IMR-90 (cell line): ENCODE measurements at regions of chr3 and their contacts with region 1.

Region 1: GRCh38 chr3:151086484-151087456 is 1.3 kb downstream of the MED12L start:
- DNase-seq: peak; percentile 86
- ATAC-seq: peak; percentile 90
- H3K4me3 ChIP-seq: peak overlapping the region; percentile 38
- H3K27ac ChIP-seq: no peak overlapping the region
- H3K4me1 ChIP-seq: no peaks in the 10 kb centered on the region
- H3K27me3 ChIP-seq: peaks cover 47% of the 10 kb centered on the region
- CTCF ChIP-seq: peak; percentile 66
- POLR2A ChIP-seq: no peak
- RAD21 ChIP-seq: peak; percentile 57

Region 2: GRCh38 chr3:150787741-150788370 is 298.9 kb before region 1 on chr3:
- CTCF ChIA-PET with region 1: no interaction called
- POLR2A ChIA-PET with region 1: no interaction called
- dilution Hi-C with region 1: no loop called
- in situ Hi-C with region 1: no loop called
- intact Hi-C with region 1: loop called (anchors 5 kb)
- DNase-seq: peak; percentile 64
- ATAC-seq: peak; percentile 93
- H3K4me3 ChIP-seq: no peak overlapping the region
- H3K27ac ChIP-seq: no peak overlapping the region
- H3K4me1 ChIP-seq: no peaks in the 10 kb centered on the region
- H3K27me3 ChIP-seq: peaks cover 23% of the 10 kb centered on the region
- CTCF ChIP-seq: peak; percentile 81
- POLR2A ChIP-seq: no peak
- RAD21 ChIP-seq: peak; percentile 73

Region 3: DNA sequence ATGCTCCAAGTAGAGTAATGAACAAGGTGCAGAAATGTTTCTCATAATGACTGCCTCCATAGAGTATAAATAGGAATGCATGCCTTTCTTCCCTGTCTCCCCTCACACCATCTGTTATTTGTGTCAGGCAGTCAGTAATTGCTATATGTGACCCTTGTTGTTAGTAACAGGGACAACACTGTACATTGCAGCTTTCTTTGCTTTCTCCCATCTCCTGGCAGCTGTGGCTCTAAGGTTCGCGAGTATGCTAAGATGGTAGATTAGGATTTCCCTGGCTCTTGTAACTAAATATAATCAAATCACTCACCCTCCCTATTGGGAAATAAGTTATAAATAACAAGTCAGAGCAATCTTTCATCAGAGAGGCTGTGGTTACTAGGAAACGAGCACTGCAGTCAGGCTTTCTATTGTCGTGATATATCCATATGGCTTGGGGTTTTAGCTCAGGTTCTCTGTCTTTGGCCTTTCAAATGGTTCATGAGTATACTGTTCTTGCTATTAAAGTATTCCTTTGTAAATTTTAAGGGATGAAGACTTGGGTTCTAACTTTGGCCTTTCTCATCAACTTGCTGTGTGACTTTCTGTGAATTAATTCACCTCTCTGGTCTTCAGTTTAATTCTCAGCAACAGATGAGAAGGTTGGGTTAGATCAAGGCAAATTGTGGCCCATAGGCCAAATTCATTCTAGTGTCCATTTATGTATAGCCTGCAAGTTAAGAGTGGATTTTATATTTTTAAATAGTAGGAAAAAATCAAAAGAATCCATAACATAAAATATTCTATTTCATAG is 173.4 kb before region 1 on chr3:
- CTCF ChIA-PET with region 1: no interaction called
- POLR2A ChIA-PET with region 1: no interaction called
- dilution Hi-C with region 1: no loop called
- in situ Hi-C with region 1: no loop called
- intact Hi-C with region 1: no loop called
- DNase-seq: no peak
- ATAC-seq: no peak
- H3K4me3 ChIP-seq: no peak overlapping the region
- H3K27ac ChIP-seq: no peak overlapping the region
- H3K4me1 ChIP-seq: no peaks in the 10 kb centered on the region
- H3K27me3 ChIP-seq: peaks cover 16% of the 10 kb centered on the region
- CTCF ChIP-seq: no peak
- POLR2A ChIP-seq: no peak
- RAD21 ChIP-seq: no peak

Region 4: GRCh38 chr3:150925751-150926201 is 161.0 kb before region 1 on chr3:
- CTCF ChIA-PET with region 1: no interaction called
- POLR2A ChIA-PET with region 1: no interaction called
- dilution Hi-C with region 1: no loop called
- in situ Hi-C with region 1: no loop called
- intact Hi-C with region 1: loop called (anchors 1 kb)
- DNase-seq: peak; percentile 4
- ATAC-seq: peak; percentile 51; the same call in 1 of the 2 replicates
- H3K4me3 ChIP-seq: no peak overlapping the region
- H3K27ac ChIP-seq: no peak overlapping the region
- H3K4me1 ChIP-seq: no peaks in the 10 kb centered on the region
- H3K27me3 ChIP-seq: peaks cover 29% of the 10 kb centered on the region
- CTCF ChIP-seq: peak; percentile 46
- POLR2A ChIP-seq: no peak
- RAD21 ChIP-seq: peak; percentile 63

Region 5: GRCh38 chr3:150975086-150975991 is 111.4 kb before region 1 on chr3:
- CTCF ChIA-PET with region 1: no interaction called
- POLR2A ChIA-PET with region 1: no interaction called
- dilution Hi-C with region 1: no loop called
- in situ Hi-C with region 1: no loop called
- intact Hi-C with region 1: no loop called
- DNase-seq: no peak
- ATAC-seq: no peak
- H3K4me3 ChIP-seq: no peak overlapping the region
- H3K27ac ChIP-seq: no peak overlapping the region
- H3K4me1 ChIP-seq: no peaks in the 10 kb centered on the region
- H3K27me3 ChIP-seq: peaks cover 15% of the 10 kb centered on the region
- CTCF ChIP-seq: no peak
- POLR2A ChIP-seq: no peak
- RAD21 ChIP-seq: no peak

Region 6: GRCh38 chr3:151008699-151009098 is 78.1 kb before region 1 on chr3:
- CTCF ChIA-PET with region 1: interaction called, 3 read pairs
- POLR2A ChIA-PET with region 1: no interaction called
- dilution Hi-C with region 1: no loop called
- in situ Hi-C with region 1: no loop called
- intact Hi-C with region 1: loop called (anchors 2 kb)
- DNase-seq: peak; percentile 66
- ATAC-seq: peak; percentile 92
- H3K4me3 ChIP-seq: no peak overlapping the region
- H3K27ac ChIP-seq: no peak overlapping the region
- H3K4me1 ChIP-seq: no peaks in the 10 kb centered on the region
- H3K27me3 ChIP-seq: peaks cover 14% of the 10 kb centered on the region
- CTCF ChIP-seq: peak; percentile 65
- POLR2A ChIP-seq: no peak
- RAD21 ChIP-seq: peak; percentile 74

Region 7: DNA sequence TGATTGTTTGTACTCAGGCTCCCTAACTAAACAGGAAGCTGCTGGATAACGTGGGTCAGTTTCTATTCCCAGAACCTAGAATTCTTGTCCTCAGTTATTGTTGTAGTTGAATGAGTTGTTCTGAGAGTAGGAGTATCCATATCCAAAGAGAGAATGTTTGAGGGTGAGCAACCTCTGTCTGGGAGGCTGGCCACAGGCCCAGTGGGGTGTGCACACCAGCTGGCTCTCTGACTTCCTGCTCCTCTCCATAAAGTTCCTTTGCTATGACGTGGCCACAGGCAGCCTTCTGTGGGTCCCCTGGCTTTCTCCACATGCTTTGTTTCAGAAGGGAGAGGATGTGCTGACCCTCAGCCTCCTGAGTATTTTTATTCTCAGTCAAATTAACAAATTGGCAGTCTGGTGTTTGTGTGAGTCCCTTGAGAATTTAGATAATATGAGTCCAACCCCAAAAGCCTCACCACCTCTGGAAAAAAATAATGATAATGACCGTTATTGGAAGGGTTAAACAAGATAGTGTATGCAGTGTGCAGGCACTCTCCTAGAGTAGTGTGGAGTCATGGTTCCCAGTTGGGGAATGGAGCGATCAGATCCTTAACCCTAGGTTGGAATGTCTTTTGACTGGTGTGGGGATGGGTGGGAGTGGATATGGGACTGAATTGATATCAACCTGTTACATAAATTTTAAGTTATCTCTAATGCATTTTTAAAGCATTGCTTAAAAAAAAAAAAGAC is 48.9 kb before region 1 on chr3:
- CTCF ChIA-PET with region 1: interaction called, 5 read pairs
- POLR2A ChIA-PET with region 1: no interaction called
- dilution Hi-C with region 1: no loop called
- in situ Hi-C with region 1: no loop called
- intact Hi-C with region 1: loop called (anchors 5 kb)
- DNase-seq: peak; percentile 97
- ATAC-seq: peak; percentile 98
- H3K4me3 ChIP-seq: no peak overlapping the region
- H3K27ac ChIP-seq: peak overlapping the region; percentile 63; the same call in 1 of the 2 replicates
- H3K4me1 ChIP-seq: no peaks in the 10 kb centered on the region
- H3K27me3 ChIP-seq: no peaks in the 10 kb centered on the region
- CTCF ChIP-seq: no peak
- POLR2A ChIP-seq: no peak
- RAD21 ChIP-seq: no peak

Region 8: GRCh38 chr3:151106311-151106710 is 19.5 kb after region 1 on chr3:
- CTCF ChIA-PET with region 1: no interaction called
- POLR2A ChIA-PET with region 1: no interaction called
- dilution Hi-C with region 1: no loop called
- in situ Hi-C with region 1: no loop called
- intact Hi-C with region 1: no loop called
- DNase-seq: no peak
- ATAC-seq: no peak
- H3K4me3 ChIP-seq: no peak overlapping the region
- H3K27ac ChIP-seq: no peak overlapping the region
- H3K4me1 ChIP-seq: no peaks in the 10 kb centered on the region
- H3K27me3 ChIP-seq: peaks cover 39% of the 10 kb centered on the region
- CTCF ChIP-seq: no peak
- POLR2A ChIP-seq: no peak
- RAD21 ChIP-seq: no peak

Region 9: GRCh38 chr3:152177757-152178156 is 1091.0 kb after region 1 on chr3:
- CTCF ChIA-PET with region 1: no interaction called
- POLR2A ChIA-PET with region 1: no interaction called
- dilution Hi-C with region 1: no loop called
- in situ Hi-C with region 1: no loop called
- intact Hi-C with region 1: no loop called
- DNase-seq: no peak
- ATAC-seq: no peak
- H3K4me3 ChIP-seq: no peak overlapping the region
- H3K27ac ChIP-seq: no peak overlapping the region; the same call in 1 of the 2 replicates
- H3K4me1 ChIP-seq: peaks cover 13% of the 10 kb centered on the region; the same call in 1 of the 2 replicates
- H3K27me3 ChIP-seq: no peaks in the 10 kb centered on the region
- CTCF ChIP-seq: no peak
- POLR2A ChIP-seq: no peak
- RAD21 ChIP-seq: no peak